ENCODE measurements at regions of chr15 and their contacts with region 1.

Region 1: DNA sequence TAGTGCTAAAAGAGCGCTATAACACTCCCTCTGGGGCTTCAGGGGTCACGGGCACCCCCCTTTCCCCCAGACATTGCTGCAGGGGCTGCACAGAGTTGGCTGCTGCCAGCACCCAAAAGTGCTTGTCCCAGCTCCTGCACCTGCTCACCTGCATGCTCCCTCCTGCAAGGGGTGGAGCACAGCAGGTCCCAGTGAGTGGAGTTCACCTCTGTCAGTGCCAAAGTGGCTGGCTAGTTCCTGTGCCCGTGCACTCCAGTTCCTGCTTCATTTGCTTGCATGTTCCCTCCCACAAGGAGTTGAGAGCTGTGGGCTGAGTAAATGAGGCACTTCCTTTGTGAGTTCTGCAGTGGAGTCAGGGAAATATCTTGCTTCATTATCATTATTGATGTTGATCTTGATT is 476.9 kb downstream of the SQOR start:
- DNase-seq: peak; percentile 6 to 43
- H3K4me3 ChIP-seq: no peak overlapping the region
- H3K27ac ChIP-seq: no peak overlapping the region
- H3K4me1 ChIP-seq: no peaks in the 10 kb centered on the region
- H3K27me3 ChIP-seq: no peaks in the 10 kb centered on the region
- CTCF ChIP-seq: no peak
- EP300 ChIP-seq: no peak
- POLR2A ChIP-seq: no peak

Region 2: DNA sequence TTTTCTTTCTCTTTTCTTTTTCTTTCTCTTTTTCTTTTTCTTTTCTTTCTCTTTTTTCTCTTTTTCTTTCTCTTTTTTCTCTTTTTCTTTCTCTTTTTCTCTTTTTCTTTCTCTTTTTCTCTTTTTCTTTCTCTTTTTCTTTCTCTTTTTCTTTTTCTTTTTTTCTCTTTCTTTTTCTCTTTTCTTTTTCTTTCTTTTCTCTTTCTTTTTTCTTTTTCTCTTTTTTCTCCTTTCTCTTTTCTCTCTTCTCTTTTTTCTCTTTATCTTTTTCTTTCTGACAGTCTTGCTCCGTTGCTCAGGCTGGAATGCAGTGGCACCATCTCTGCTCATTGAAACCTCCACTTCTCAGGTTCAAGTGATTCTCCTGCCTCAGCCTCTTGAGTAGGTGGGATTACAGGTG is 141.2 kb before region 1 on chr15:
- intact Hi-C with region 1: loop called (anchors 10 kb)
- DNase-seq: no peak
- H3K4me3 ChIP-seq: no peak overlapping the region
- H3K27ac ChIP-seq: no peak overlapping the region
- H3K4me1 ChIP-seq: no peaks in the 10 kb centered on the region
- H3K27me3 ChIP-seq: no peaks in the 10 kb centered on the region
- CTCF ChIP-seq: no peak
- EP300 ChIP-seq: no peak
- POLR2A ChIP-seq: no peak

Measured in stomach (tissue), 19 donors.